ENCODE measurements at regions of chr2 and their contacts with region 1.

Region 1: DNA sequence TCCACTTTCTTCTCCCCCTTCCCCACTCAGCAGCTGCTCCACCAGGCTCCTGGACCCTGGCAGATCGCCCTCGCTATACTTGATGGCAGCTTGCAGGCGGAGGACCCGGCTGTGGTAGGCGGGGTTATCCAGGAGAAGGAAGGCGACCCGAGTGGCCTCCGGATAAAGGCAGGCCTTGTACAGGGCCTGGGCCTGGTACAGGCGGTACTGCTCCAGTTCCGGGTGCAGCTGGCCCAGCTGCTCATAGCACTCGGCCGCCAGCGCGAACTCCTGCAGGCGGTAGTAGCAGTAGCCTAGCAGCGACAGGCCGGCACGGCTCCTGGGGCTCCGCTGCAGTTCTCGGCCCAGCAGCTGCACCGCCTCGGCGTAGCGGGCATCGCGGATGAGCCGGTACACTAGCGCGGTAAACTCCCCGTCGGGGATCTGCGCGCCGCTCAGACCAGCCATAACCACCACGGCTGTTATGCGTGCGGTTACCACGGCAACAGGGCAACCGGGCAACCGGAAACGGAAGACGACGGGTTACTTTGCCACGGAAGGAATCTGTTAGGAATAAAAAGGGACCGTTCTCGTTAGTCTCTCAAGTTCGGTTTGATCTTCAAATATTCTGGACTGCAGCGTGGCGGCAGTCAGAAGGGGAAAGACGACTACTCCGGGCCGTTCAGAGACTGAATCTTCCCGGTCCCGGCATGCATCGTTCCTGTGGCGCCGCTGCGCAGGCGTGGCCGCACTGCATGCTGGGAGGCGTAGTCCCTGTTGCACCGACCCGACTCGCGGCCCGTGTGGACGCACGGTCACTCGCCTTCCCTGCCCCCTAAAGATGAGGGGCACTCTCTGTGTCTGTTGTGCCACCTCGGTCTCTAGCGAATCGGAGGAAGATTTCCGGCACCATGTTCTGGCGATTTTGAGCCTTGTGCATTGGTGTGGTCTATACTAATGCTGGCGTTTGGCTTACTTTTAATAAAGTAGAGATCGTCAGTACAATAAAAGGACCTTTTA is 226.0 kb downstream of the AGPS start:
- DNase-seq: peak; percentile 86 to 93 (median 91)
- ATAC-seq: peak; percentile 95
- H3K4me3 ChIP-seq: peak overlapping the region; percentile 86
- H3K4me3 Mint-ChIP-seq: peak overlapping the region; percentile 80 to 99 (median 96)
- H3K27ac ChIP-seq: peak overlapping the region; percentile 96
- H3K27ac Mint-ChIP-seq: peak overlapping the region; percentile 98 to 100 (median 99)
- H3K4me1 ChIP-seq: no peaks in the 10 kb centered on the region
- H3K4me1 Mint-ChIP-seq: peaks cover 0 to 15% (median 9%) of the 10 kb centered on the region in 7 donors
- H3K27me3 ChIP-seq: no peaks in the 10 kb centered on the region
- H3K27me3 Mint-ChIP-seq: peaks cover 0 to 35% (median 9%) of the 10 kb centered on the region in 5 donors

Region 2: GRCh38 chr2:176269319-176270099 is 1349.0 kb before region 1 on chr2 and contains the start of gene MTX2:
- CTCF ChIA-PET with region 1: no interaction called
- POLR2A ChIA-PET with region 1: no interaction called
- intact Hi-C with region 1: loop called in 1 of 2 experiments (anchors 10 kb)
- DNase-seq: peak; percentile 48 to 80 (median 75)
- ATAC-seq: peak; percentile 92
- H3K4me3 ChIP-seq: peak within 1 kb of the TSS; percentile 97
- H3K4me3 Mint-ChIP-seq: peak within 1 kb of the TSS; percentile 95 to 99 (median 97)
- H3K27ac ChIP-seq: peak within 1 kb of the TSS; percentile 84
- H3K27ac Mint-ChIP-seq: peak within 1 kb of the TSS; percentile 70 to 97 (median 92)
- H3K4me1 ChIP-seq: peaks cover 7 to 8% of the 10 kb centered on the region in 2 donors
- H3K4me1 Mint-ChIP-seq: peaks cover 16 to 46% (median 39%) of the 10 kb centered on the region in 7 donors
- H3K27me3 ChIP-seq: no peaks in the 10 kb centered on the region
- H3K27me3 Mint-ChIP-seq: peaks cover 0 to 19% (median 9%) of the 10 kb centered on the region in 5 donors
- total RNA-seq, gene MTX2: 6.6 to 14.3 (median 9.3) TPM

Region 3: DNA sequence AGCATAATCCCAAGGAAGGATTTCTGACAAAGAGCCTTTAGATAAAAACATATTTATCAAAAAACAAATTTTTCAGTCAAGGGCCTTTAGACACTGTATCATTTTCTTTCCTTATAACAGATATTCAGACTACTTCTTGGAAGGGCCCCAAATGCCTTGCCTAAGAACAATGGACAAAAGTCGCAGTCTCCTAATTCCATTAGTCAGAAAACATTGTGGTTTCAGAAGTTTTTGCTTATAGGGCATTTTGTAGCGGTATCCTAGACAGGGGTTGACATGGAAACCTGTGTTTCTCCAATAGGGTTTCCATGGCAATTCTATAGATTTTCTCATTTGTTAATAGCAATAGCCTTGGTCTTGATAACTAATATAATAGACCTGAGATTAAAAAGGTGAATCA is 262.7 kb before region 1 on chr2:
- CTCF ChIA-PET with region 1: no interaction called
- POLR2A ChIA-PET with region 1: no interaction called
- intact Hi-C with region 1: no loop called
- DNase-seq: no peak
- ATAC-seq: no peak
- H3K4me3 ChIP-seq: no peak overlapping the region
- H3K4me3 Mint-ChIP-seq: no peak overlapping the region
- H3K27ac ChIP-seq: no peak overlapping the region
- H3K27ac Mint-ChIP-seq: no peak overlapping the region
- H3K4me1 ChIP-seq: peaks cover 0 to 4% of the 10 kb centered on the region in 2 donors
- H3K4me1 Mint-ChIP-seq: peaks cover 0 to 12% (median 0%) of the 10 kb centered on the region in 7 donors
- H3K27me3 ChIP-seq: no peaks in the 10 kb centered on the region
- H3K27me3 Mint-ChIP-seq: no peaks in the 10 kb centered on the region

Region 4: GRCh38 chr2:177392373-177393202 is 226.0 kb before region 1 on chr2 and contains the start of gene AGPS:
- CTCF ChIA-PET with region 1: no interaction called
- POLR2A ChIA-PET with region 1: no interaction called
- intact Hi-C with region 1: loop called (anchors 1 to 2 kb)
- DNase-seq: peak; percentile 62 to 86 (median 71)
- ATAC-seq: peak; percentile 94
- H3K4me3 ChIP-seq: peak within 1 kb of the TSS; percentile 67
- H3K4me3 Mint-ChIP-seq: peak within 1 kb of the TSS; percentile 81 to 99 (median 96)
- H3K27ac ChIP-seq: peak within 1 kb of the TSS; percentile 53
- H3K27ac Mint-ChIP-seq: peak within 1 kb of the TSS; percentile 85 to 97 (median 92)
- H3K4me1 ChIP-seq: peaks cover 20 to 23% of the 10 kb centered on the region in 2 donors
- H3K4me1 Mint-ChIP-seq: peaks cover 48 to 74% (median 61%) of the 10 kb centered on the region in 7 donors
- H3K27me3 ChIP-seq: no peaks in the 10 kb centered on the region
- H3K27me3 Mint-ChIP-seq: no peaks in the 10 kb centered on the region
- total RNA-seq, gene AGPS: 21.8 to 60.4 (median 26.1) TPM

Region 5: DNA sequence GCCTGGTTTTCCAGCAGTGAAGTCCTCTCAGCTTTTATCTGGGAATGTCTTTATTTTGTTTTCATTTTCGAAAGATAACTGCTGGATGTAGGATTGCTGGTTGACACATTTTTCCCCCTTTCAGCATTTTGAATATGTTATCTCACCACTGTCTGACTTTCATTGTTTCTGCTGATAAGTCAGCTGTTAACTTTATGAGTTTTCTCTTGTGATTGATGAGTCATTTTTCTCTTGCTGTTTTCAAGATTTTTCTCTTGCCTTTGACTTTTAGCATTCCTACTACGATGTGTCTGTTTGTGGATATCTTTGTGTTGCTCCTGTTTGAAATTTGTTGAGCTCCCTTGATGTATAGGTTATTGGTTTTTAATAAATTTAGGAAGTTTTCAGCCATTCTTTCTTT is 140.5 kb before region 1 on chr2:
- CTCF ChIA-PET with region 1: no interaction called
- POLR2A ChIA-PET with region 1: no interaction called
- intact Hi-C with region 1: no loop called
- DNase-seq: no peak
- ATAC-seq: no peak
- H3K4me3 ChIP-seq: no peak overlapping the region
- H3K4me3 Mint-ChIP-seq: no peak overlapping the region
- H3K27ac ChIP-seq: no peak overlapping the region
- H3K27ac Mint-ChIP-seq: no peak overlapping the region
- H3K4me1 ChIP-seq: no peaks in the 10 kb centered on the region
- H3K4me1 Mint-ChIP-seq: peaks cover 0 to 1% (median 0%) of the 10 kb centered on the region in 7 donors
- H3K27me3 ChIP-seq: no peaks in the 10 kb centered on the region
- H3K27me3 Mint-ChIP-seq: no peaks in the 10 kb centered on the region

Region 6: GRCh38 chr2:177763532-177764265 is 145.1 kb after region 1 on chr2:
- CTCF ChIA-PET with region 1: no interaction called
- POLR2A ChIA-PET with region 1: no interaction called
- intact Hi-C with region 1: loop called in 1 of 2 experiments (anchors 5 kb)
- DNase-seq: peak; percentile 51 to 75 (median 68)
- ATAC-seq: peak; percentile 95
- H3K4me3 ChIP-seq: peak overlapping the region; percentile 20
- H3K4me3 Mint-ChIP-seq: peak overlapping the region in 8 of 10 donors; percentile 20 to 55 (median 30)
- H3K27ac ChIP-seq: no peak overlapping the region
- H3K27ac Mint-ChIP-seq: peak overlapping the region in 1 of 9 donors; percentile 42
- H3K4me1 ChIP-seq: peaks cover 0 to 4% of the 10 kb centered on the region in 2 donors
- H3K4me1 Mint-ChIP-seq: peaks cover 0 to 11% (median 6%) of the 10 kb centered on the region in 7 donors
- H3K27me3 ChIP-seq: no peaks in the 10 kb centered on the region
- H3K27me3 Mint-ChIP-seq: peaks cover 10 to 28% (median 24%) of the 10 kb centered on the region in 5 donors

Region 7: GRCh38 chr2:178450774-178451525 is 832.4 kb after region 1 on chr2 and contains the starts of genes PJVK and PRKRA:
- CTCF ChIA-PET with region 1: no interaction called
- POLR2A ChIA-PET with region 1: no interaction called
- intact Hi-C with region 1: loop called in 1 of 2 experiments (anchors 10 kb)
- DNase-seq: peak; percentile 92 to 99 (median 93)
- ATAC-seq: peak; percentile 94
- H3K4me3 ChIP-seq: peak within 1 kb of the TSS; percentile 94
- H3K4me3 Mint-ChIP-seq: peak within 1 kb of the TSS; percentile 90 to 96 (median 90)
- H3K27ac ChIP-seq: peak within 1 kb of the TSS; percentile 100
- H3K27ac Mint-ChIP-seq: peak within 1 kb of the TSS; percentile 88 to 98 (median 95)
- H3K4me1 ChIP-seq: peaks cover 12 to 25% of the 10 kb centered on the region in 2 donors
- H3K4me1 Mint-ChIP-seq: peaks cover 12 to 36% (median 30%) of the 10 kb centered on the region in 7 donors
- H3K27me3 ChIP-seq: no peaks in the 10 kb centered on the region
- H3K27me3 Mint-ChIP-seq: peaks cover 0 to 9% (median 0%) of the 10 kb centered on the region in 5 donors
- total RNA-seq, gene PJVK: 2.1 to 6.3 (median 3.8) TPM
- total RNA-seq, gene PRKRA: 40.8 to 113 (median 59.4) TPM